Dendritic cell treated with granulocyte-macrophage colony-stimulating factor and Interleukin-4, amounts not matched to agents 40 ng/mL and 50 ng/mL, for 4 days (primary cell): ENCODE measurements at regions of chr2 and their contacts with region 1.

Region 1: GRCh38 chr2:24164125-24164973 is 10.5 kb upstream of the FAM228A start:
- H3K4me3 Mint-ChIP-seq: no peak overlapping the region
- H3K27ac Mint-ChIP-seq: peak overlapping the region; percentile 70
- H3K4me1 Mint-ChIP-seq: peaks cover 44% of the 10 kb centered on the region
- H3K27me3 Mint-ChIP-seq: no peaks in the 10 kb centered on the region

Region 2: GRCh38 chr2:24123195-24123921 is 41.0 kb before region 1 on chr2 and contains the starts of genes FAM228B and PFN4:
- intact Hi-C with region 1: loop called (anchors 5 kb)
- H3K4me3 Mint-ChIP-seq: peak within 1 kb of the TSS; percentile 82
- H3K27ac Mint-ChIP-seq: peak within 1 kb of the TSS; percentile 89
- H3K4me1 Mint-ChIP-seq: peaks cover 7% of the 10 kb centered on the region
- H3K27me3 Mint-ChIP-seq: no peaks in the 10 kb centered on the region